Spleen (tissue), 13 donors: ENCODE measurements at regions of chr1 and their contacts with region 1.

Region 1: GRCh38 chr1:15526490-15527339 is at the start of gene DNAJC16:
- DNase-seq: peak; percentile 99
- H3K4me3 ChIP-seq: peak within 1 kb of the TSS; percentile 65 to 92 (median 80)
- H3K27ac ChIP-seq: peak within 1 kb of the TSS; percentile 88 to 99 (median 96)
- H3K4me1 ChIP-seq: peaks cover 19 to 72% (median 42%) of the 10 kb centered on the region in 6 donors
- H3K27me3 ChIP-seq: no peaks in the 10 kb centered on the region
- CTCF ChIP-seq: peak in 7 of 11 experiments; percentile 17 to 61 (median 46)
- POLR2A ChIP-seq: peak in 2 of 3 donors; percentile 26 to 50
- total RNA-seq, gene DNAJC16: 17.0 to 23.0 (median 21.0) TPM

Region 2: GRCh38 chr1:15617175-15617880 is 90.6 kb after region 1 on chr1 and contains the start of gene DDI2:
- intact Hi-C with region 1: loop called (anchors 10 kb)
- DNase-seq: peak; percentile 99
- H3K4me3 ChIP-seq: peak within 1 kb of the TSS; percentile 88 to 99 (median 96)
- H3K27ac ChIP-seq: peak within 1 kb of the TSS; percentile 89 to 97 (median 95)
- H3K4me1 ChIP-seq: peaks cover 33 to 62% (median 52%) of the 10 kb centered on the region in 6 donors
- H3K27me3 ChIP-seq: no peaks in the 10 kb centered on the region
- CTCF ChIP-seq: no peak
- POLR2A ChIP-seq: peak in 2 of 3 donors; percentile 69 to 88
- total RNA-seq, gene DDI2: 43.3 to 75.4 (median 47.2) TPM